Tibial artery (tissue), 4 donors: ENCODE measurements at regions of chr22 and their contacts with region 1.

Region 1: GRCh38 chr22:38506118-38506962 is at the start of gene DDX17:
- DNase-seq: peak; percentile 95 to 98
- H3K4me3 ChIP-seq: peak within 1 kb of the TSS; percentile 83 to 97
- H3K27ac ChIP-seq: peak within 1 kb of the TSS; percentile 99 to 100
- H3K4me1 ChIP-seq: peaks cover 0 to 42% (median 22%) of the 10 kb centered on the region in 4 donors
- H3K27me3 ChIP-seq: no peaks in the 10 kb centered on the region
- CTCF ChIP-seq: peak in 1 of 2 experiments; percentile 14

Region 2: DNA sequence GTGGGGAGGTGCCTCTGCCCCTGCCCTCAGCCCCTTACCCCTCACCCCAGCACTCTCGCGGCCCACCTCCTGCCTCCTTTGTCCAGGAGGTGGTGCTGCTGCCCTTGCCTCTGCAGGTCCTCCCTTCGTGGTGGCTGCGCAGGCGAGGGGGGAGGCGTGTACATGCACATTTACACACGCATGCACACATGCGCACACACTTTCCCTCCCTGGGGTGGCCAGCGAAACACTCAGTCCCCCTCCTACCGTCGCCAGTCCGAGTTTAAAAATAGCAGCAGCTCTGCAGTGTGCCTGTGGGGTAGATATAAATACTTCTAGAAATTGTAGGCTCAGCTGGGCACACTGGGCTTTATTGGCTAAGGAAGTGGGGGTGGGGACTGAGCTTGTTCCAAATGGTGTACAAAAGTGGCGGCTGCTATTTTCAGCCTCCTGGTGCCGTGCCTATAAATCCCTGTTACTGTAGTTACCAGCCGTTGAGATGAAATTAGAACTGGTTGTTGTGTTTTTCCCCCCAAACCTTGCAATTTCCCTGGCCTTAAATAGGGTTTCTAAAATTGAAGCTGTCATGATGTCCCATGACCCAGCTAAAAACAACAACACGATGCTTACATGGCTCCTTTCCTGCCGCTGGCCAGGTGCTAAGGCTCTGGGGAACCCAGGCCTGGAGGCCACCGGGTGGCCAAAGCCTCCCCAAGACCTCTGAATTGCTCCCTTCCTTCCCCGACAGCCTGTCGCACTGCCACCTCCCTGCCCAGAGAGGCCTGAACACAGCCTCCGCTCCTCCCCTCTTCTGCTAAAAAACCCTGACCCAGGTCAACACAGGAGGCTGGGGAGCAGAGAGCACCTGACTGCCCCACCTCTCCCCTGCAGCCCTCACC is 436.7 kb before region 1 on chr22:
- intact Hi-C with region 1: loop called (anchors 5 kb)
- DNase-seq: peak; percentile 87 to 98
- H3K4me3 ChIP-seq: peak overlapping the region in 1 of 2 donors; percentile 24
- H3K27ac ChIP-seq: peak overlapping the region; percentile 91 to 97
- H3K4me1 ChIP-seq: peaks cover 15 to 58% (median 36%) of the 10 kb centered on the region in 4 donors
- H3K27me3 ChIP-seq: no peaks in the 10 kb centered on the region
- CTCF ChIP-seq: peak; percentile 74 to 79